Astrocyte of the cerebellum (primary cell): ENCODE measurements at regions of chr1 and their contacts with region 1.

Region 1: GRCh38 chr1:92354259-92354658 is 55.4 kb downstream of the RPAP2 start:
- DNase-seq: no peak
- H3K4me3 ChIP-seq: no peak overlapping the region
- CTCF ChIP-seq: no peak

Region 2: DNA sequence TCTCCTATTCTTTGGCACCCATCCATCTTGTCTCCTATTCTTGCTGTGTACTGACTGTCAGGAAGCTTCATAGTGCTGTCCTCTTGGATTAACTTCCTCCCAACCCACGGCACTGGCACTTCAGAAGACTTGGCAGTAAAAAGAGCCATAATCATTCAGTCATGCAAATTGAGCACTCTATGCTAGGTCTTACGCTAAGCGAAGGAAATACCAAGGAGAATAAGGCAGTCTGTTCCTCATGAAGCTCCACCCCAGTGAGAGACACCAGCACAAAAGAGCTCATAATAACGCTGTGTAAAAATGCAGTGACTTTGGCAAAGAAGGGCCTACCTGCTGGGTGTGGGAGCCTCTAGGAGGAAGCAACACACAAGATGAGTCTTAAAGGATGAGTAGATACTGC is 65.4 kb after region 1 on chr1:
- in situ Hi-C with region 1: loop called (anchors 5 kb)
- DNase-seq: no peak
- H3K4me3 ChIP-seq: no peak overlapping the region
- CTCF ChIP-seq: no peak